Activated T-helper 1 cell treated with anti-CD3 and anti-CD28 coated beads, Interleukin-12 subunit alpha, Interleukin-12 subunit beta, Interleukin-2, Interleukin-4 antibody, amounts not matched to agents 30 ng/mL and 10 ng/mL and 1 ng/mL, durations not matched to agents 14 hours and 24 hours and 36 hours (primary cell): ENCODE measurements at regions of chr15 and their contacts with region 1.

Region 1: DNA sequence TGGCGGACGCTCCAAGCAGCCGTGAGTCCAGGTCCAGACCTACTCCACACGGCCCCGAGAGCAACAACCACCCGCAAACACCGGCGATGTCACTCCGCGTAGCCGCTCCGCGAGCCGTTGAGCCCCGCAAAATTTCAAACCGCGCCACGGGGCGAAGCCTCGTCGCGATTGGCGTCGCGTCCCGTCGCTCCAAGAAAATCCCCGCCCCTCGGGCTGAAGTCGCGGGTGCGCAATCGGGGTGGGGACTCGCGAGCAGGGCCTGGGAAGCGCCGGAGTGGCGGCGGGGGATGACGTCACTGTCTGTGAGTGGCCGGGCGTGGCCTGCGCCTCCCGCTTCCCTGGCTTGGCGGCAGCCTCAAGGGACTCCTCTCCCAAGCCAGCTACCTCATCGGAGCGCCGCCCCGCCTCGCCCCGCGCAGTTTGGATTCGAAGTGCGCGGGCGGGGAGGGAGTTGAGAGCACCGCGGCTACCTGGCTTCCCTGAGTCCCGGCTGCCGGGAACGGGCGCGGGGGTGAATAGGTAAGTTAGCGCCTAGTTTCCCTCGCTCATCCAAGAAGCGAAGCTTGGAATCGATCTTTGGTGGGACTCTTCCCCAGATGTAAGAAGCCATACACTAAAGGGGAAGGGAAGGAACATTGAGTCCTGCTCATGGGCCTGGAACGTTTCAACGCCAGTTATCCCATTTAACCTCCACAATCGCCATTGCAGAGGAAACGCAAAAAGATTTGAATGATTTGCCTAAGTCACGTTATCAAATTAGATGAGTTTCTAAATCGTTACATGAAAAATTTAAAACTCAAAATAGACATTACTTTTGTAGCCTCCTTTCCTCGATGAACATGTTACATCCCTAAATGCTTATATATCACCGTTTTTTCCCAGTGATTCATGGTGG is at the start of gene PRC1:
- DNase-seq: peak; percentile 99
- H3K4me3 Mint-ChIP-seq: peak within 1 kb of the TSS; percentile 100
- H3K27ac Mint-ChIP-seq: peak within 1 kb of the TSS; percentile 100
- H3K4me1 Mint-ChIP-seq: peaks cover 42% of the 10 kb centered on the region
- H3K27me3 Mint-ChIP-seq: no peaks in the 10 kb centered on the region
- total RNA-seq, gene PRC1: 78.4 and 86.0 TPM in 2 replicates

Region 2: GRCh38 chr15:90982135-90982534 is 12.5 kb before region 1 on chr15:
- intact Hi-C with region 1: loop called (anchors 1 kb)
- DNase-seq: no peak
- H3K4me3 Mint-ChIP-seq: peak overlapping the region; percentile 17
- H3K27ac Mint-ChIP-seq: peak overlapping the region; percentile 67
- H3K4me1 Mint-ChIP-seq: peaks cover 34% of the 10 kb centered on the region
- H3K27me3 Mint-ChIP-seq: no peaks in the 10 kb centered on the region

Region 3: GRCh38 chr15:91022075-91022835 is 27.6 kb after region 1 on chr15 and contains the start of gene VPS33B:
- intact Hi-C with region 1: loop called (anchors 1 kb)
- DNase-seq: peak; percentile 73
- H3K4me3 Mint-ChIP-seq: peak within 1 kb of the TSS; percentile 93
- H3K27ac Mint-ChIP-seq: peak within 1 kb of the TSS; percentile 94
- H3K4me1 Mint-ChIP-seq: peaks cover 40% of the 10 kb centered on the region
- H3K27me3 Mint-ChIP-seq: no peaks in the 10 kb centered on the region
- total RNA-seq, gene VPS33B: 20.8 and 20.9 TPM in 2 replicates

Region 4: GRCh38 chr15:91049378-91050127 is 54.9 kb after region 1 on chr15:
- intact Hi-C with region 1: loop called (anchors 2 kb)
- DNase-seq: peak; percentile 51
- H3K4me3 Mint-ChIP-seq: no peak overlapping the region
- H3K27ac Mint-ChIP-seq: no peak overlapping the region
- H3K4me1 Mint-ChIP-seq: peaks cover 20% of the 10 kb centered on the region
- H3K27me3 Mint-ChIP-seq: peaks cover 41% of the 10 kb centered on the region

Region 5: GRCh38 chr15:91165850-91166249 is 171.2 kb after region 1 on chr15:
- intact Hi-C with region 1: no loop called
- DNase-seq: no peak
- H3K4me3 Mint-ChIP-seq: no peak overlapping the region
- H3K27ac Mint-ChIP-seq: no peak overlapping the region
- H3K4me1 Mint-ChIP-seq: no peaks in the 10 kb centered on the region
- H3K27me3 Mint-ChIP-seq: peaks cover under 1% of the 10 kb centered on the region